GM10248 (cell line): ENCODE measurements at regions of chr1 and their contacts with region 1.

Region 1: DNA sequence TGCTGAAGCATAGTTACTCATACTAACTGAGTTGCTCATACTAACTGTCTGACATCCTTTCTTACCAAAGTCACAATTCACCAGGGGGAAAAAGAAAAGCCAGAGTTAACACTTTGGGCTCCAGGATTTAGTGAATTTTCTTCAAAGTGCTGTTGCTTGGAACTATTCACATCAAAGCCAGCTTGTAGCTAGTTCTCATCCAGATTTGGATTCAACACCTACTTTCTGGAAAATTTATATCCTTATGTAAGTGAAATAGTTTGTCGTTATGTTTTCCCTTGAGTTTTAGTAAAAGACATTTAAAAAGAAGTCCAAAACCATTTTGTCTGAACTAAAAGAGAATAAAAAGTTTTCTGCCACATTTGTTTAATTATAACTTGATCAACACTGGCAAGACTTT is 264.6 kb downstream of the BRINP2 start:
- DNase-seq: no peak
- CTCF ChIP-seq: no peak

Region 2: DNA sequence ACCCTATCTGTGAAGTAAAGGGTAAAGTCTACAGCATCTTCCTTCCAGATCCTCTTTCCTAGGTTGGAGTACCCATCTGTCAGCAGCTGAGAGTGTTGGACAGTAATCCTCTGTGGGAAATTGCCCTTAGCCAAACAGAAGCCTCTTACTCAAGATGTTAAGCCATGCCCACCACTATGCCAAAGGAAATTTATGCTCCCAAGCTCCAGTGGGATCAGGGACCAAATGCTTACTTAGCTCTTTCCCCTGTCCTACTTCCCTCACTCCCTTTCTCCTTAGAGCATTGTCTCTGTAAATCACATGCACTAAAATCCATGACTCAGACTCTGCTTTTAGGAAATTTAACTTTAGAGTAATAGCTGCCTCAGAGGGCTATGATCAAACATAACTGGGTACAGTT is 10.6 kb before region 1 on chr1:
- CTCF ChIA-PET with region 1: interaction called, 10 read pairs
- POLR2A ChIA-PET with region 1: no interaction called
- DNase-seq: no peak
- CTCF ChIP-seq: no peak